Naive thymus-derived CD4-positive, alpha-beta T cell (primary cell): ENCODE measurements at regions of chr16 and their contacts with region 1.

Region 1: GRCh38 chr16:27169511-27170071 is 33.7 kb upstream of the KDM8 start:
- DNase-seq: peak; percentile 32 to 92 (median 88)
- ATAC-seq: peak; percentile 94
- H3K4me3 ChIP-seq: peak overlapping the region; percentile 7
- H3K4me3 Mint-ChIP-seq: peak overlapping the region; percentile 38 to 78 (median 70)
- H3K27ac ChIP-seq: peak overlapping the region; percentile 64
- H3K27ac Mint-ChIP-seq: peak overlapping the region; percentile 67 to 96 (median 91)
- H3K4me1 ChIP-seq: peaks cover 53 to 60% of the 10 kb centered on the region in 2 donors
- H3K4me1 Mint-ChIP-seq: peaks cover 38 to 78% (median 74%) of the 10 kb centered on the region in 7 donors
- H3K27me3 ChIP-seq: no peaks in the 10 kb centered on the region
- H3K27me3 Mint-ChIP-seq: peaks cover 0 to 3% (median 0%) of the 10 kb centered on the region in 5 donors

Region 2: GRCh38 chr16:27455700-27456099 is 286.1 kb after region 1 on chr16:
- CTCF ChIA-PET with region 1: interaction called, 5 read pairs
- POLR2A ChIA-PET with region 1: interaction called, 4 read pairs
- intact Hi-C with region 1: loop called in 1 of 2 experiments (anchors 2 kb)
- DNase-seq: peak in 6 of 9 donors; percentile 22 to 47 (median 32)
- ATAC-seq: peak; percentile 18
- H3K4me3 ChIP-seq: no peak overlapping the region
- H3K4me3 Mint-ChIP-seq: peak overlapping the region in 9 of 10 donors; percentile 3 to 75 (median 23)
- H3K27ac ChIP-seq: no peak overlapping the region
- H3K27ac Mint-ChIP-seq: peak overlapping the region; percentile 54 to 87 (median 79)
- H3K4me1 ChIP-seq: peaks cover 24 to 46% of the 10 kb centered on the region in 2 donors
- H3K4me1 Mint-ChIP-seq: peaks cover 30 to 75% (median 51%) of the 10 kb centered on the region in 7 donors
- H3K27me3 ChIP-seq: no peaks in the 10 kb centered on the region
- H3K27me3 Mint-ChIP-seq: no peaks in the 10 kb centered on the region